Activated CD4-positive, alpha-beta memory T cell treated with anti-CD3 and anti-CD28 coated beads for 36 hours (primary cell): ENCODE measurements at regions of chr2 and their contacts with region 1.

Region 1: DNA sequence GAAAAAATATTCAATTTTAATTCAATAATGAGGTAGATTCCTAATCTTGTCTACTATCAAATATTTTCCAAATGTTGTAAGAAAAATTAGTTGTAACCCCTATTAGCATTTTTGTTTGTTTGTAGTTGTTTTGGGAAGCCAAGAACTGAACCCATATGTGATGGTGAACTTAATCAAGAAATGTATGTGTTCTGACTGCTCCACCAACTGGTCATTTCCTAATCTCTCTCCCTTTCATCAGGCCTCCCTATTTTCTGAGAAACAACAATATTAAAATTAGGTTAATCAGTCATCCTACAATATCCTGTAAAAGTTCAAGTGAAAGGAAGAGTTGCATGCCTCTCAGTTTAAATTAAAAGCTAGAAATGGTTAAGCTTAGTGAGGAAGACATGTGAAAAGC is 504.0 kb downstream of the EPHA4 start:
- DNase-seq: no peak
- H3K4me3 Mint-ChIP-seq: no peak overlapping the region
- H3K27ac Mint-ChIP-seq: no peak overlapping the region
- H3K4me1 Mint-ChIP-seq: no peaks in the 10 kb centered on the region
- H3K27me3 Mint-ChIP-seq: no peaks in the 10 kb centered on the region

Region 2: DNA sequence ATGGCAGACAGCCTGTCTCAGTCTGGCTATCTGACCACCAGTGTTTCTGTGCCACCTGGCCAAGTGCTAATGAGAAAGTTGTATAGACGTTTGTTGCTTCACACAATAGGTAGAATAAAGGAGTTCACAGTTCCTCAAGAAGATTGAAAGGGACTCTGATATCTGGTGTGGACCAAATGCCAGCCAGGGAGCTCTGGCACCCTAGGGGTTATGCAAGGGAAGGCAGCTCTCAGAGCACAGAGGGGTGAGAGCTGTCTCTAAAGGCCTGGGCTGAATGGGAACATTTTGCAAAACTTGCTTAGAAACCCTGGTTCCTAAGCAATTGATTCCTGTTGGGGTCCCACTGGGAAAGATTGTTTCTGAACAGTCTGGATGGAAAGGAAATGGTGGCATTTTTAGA is 49.8 kb before region 1 on chr2:
- CTCF ChIA-PET with region 1: no interaction called
- POLR2A ChIA-PET with region 1: no interaction called
- intact Hi-C with region 1: loop called (anchors 5 kb)
- DNase-seq: no peak
- H3K4me3 Mint-ChIP-seq: no peak overlapping the region
- H3K27ac Mint-ChIP-seq: no peak overlapping the region
- H3K4me1 Mint-ChIP-seq: no peaks in the 10 kb centered on the region
- H3K27me3 Mint-ChIP-seq: peaks cover 3% of the 10 kb centered on the region

Region 3: GRCh38 chr2:221100467-221101089 is 32.5 kb after region 1 on chr2:
- CTCF ChIA-PET with region 1: no interaction called
- POLR2A ChIA-PET with region 1: no interaction called
- intact Hi-C with region 1: no loop called
- DNase-seq: no peak
- H3K4me3 Mint-ChIP-seq: no peak overlapping the region
- H3K27ac Mint-ChIP-seq: no peak overlapping the region
- H3K4me1 Mint-ChIP-seq: peaks cover 5% of the 10 kb centered on the region
- H3K27me3 Mint-ChIP-seq: peaks cover 3% of the 10 kb centered on the region